ENCODE measurements at regions of chr3 and their contacts with region 1.

Region 1: DNA sequence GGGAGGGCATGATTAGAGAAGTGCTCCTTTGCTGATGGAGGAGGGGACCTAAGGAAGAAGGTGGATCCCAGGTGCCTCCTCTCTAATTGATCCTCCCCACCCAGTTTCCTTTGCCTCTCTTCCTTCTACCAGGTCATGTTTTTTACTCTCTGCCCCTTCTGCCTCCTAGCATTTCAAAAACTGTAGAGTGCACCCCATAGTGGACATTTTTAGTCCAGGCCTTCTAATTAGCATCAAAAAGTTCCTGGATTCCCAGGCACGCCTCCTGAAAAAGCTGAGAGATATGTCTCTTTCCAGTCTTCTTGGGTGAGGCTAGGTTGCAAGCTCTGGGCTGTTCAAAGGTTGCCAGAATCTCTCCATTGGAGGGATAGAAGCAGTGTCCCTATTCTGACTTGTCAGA is 18.7 kb upstream of the ITGB5 start:
- DNase-seq: no peak
- H3K4me3 ChIP-seq: no peak overlapping the region
- CTCF ChIP-seq: no peak

Region 2: DNA sequence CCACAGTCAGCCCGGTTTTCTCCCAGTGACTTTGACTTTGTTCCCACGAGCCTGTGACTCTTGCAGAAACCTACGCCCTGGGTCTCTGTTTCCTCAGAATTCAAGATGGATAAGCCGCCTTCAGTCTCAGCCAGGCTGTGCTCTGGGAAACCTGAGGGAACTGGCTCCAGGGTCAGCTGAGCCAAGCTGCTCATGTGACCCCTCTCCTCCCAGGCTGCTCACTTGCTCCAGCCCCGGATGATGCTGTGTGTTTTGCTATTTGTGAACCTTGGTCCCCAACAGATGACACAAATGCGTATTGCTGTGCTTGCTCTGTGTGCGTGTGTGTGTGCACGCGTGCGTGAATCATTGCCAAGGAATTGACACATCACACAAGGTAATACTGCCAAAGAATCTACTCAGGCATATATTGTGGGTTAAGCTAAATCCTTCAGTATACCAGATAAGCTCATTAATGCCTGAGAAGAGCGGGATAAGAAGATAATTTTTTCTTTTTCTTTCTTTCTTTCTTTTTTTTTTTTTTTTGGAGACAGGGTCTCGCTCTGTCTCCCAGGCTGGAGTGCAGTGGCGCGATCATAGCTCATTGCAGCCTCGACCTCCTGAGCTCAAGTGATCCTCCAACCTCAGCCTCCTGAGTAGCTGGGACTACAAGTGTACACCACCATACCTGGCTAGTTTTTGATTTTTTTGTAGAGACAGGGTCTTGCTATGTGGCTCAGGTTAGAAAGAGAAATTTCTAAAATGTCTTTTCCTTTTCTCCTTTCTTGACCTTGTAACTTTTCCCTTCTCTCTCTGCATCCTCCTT is 204.8 kb before region 1 on chr3:
- CTCF ChIA-PET with region 1: interaction called, 10 read pairs
- POLR2A ChIA-PET with region 1: no interaction called
- DNase-seq: no peak
- H3K4me3 ChIP-seq: no peak overlapping the region
- CTCF ChIP-seq: no peak

Region 3: GRCh38 chr3:124774327-124774718 is 131.5 kb before region 1 on chr3:
- CTCF ChIA-PET with region 1: interaction called, 467 read pairs
- POLR2A ChIA-PET with region 1: no interaction called
- DNase-seq: no peak
- H3K4me3 ChIP-seq: no peak overlapping the region
- CTCF ChIP-seq: no peak

Region 4: GRCh38 chr3:124791639-124792151 is 114.2 kb before region 1 on chr3:
- CTCF ChIA-PET with region 1: interaction called, 188 read pairs
- POLR2A ChIA-PET with region 1: no interaction called
- DNase-seq: peak; percentile 95
- H3K4me3 ChIP-seq: peak overlapping the region; percentile 36
- CTCF ChIP-seq: no peak

Region 5: DNA sequence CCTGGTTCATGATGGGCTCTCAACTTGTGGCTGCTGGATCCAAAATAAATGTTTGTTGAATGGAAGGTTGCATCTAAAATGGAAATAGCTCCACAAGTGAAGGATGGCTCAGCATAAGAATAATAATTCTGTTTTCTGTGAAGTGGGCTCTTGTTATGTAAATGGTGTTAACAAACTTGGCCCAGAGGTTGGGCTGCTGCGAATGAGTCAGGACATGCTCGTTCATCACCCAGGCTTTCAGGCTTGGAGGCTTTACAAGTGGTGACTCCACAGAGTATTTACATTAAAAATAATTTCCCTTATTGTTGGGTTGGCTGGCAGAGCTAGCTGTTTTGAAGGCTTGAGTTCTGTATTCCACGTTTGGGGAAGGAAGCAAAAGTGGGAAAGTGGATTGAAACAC is 79.1 kb before region 1 on chr3:
- CTCF ChIA-PET with region 1: interaction called, 10 read pairs
- POLR2A ChIA-PET with region 1: no interaction called
- DNase-seq: peak; percentile 60
- H3K4me3 ChIP-seq: no peak overlapping the region
- CTCF ChIP-seq: no peak

Region 6: DNA sequence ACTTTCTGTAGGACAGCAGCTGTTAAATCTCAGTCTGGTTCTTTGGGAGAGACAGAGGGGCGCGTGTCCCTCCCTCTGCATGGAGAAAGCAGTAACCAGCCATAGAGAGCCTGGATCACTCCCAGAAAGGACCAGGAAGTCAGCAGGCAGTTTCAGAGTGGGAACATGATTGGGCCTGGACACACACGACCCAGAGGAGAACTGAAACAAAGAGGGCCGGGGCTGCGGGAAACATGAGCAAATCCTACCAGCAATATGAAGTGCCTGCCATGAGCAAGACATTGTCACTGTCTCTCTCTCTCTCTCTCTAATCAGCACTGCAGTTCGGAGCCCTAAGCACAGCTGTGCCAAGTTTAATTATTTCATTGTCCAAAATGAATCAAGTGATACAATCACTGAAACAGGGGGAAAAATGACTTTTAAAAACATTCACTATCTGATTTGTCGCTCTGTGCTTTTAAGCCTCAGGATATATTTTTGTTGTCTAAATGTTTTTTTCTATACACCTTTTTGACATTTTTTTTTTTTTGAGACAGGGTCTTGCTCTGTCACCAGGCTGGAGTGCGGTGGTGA is 11.1 kb after region 1 on chr3:
- CTCF ChIA-PET with region 1: interaction called, 48 read pairs
- POLR2A ChIA-PET with region 1: no interaction called
- DNase-seq: no peak
- H3K4me3 ChIP-seq: no peak overlapping the region
- CTCF ChIP-seq: no peak

Region 7: GRCh38 chr3:124972463-124972862 is 66.6 kb after region 1 on chr3:
- CTCF ChIA-PET with region 1: no interaction called
- POLR2A ChIA-PET with region 1: no interaction called
- DNase-seq: no peak
- H3K4me3 ChIP-seq: no peak overlapping the region
- CTCF ChIP-seq: no peak

Measured in AG04449 (cell line).